GM12878 (cell line): ENCODE measurements at regions of chr7 and their contacts with region 1.

Region 1: GRCh38 chr7:64902806-64903721 is at the start of gene ZNF273:
- DNase-seq: peak; percentile 71
- ATAC-seq: peak; percentile 96
- H3K4me3 ChIP-seq: peak within 1 kb of the TSS; percentile 69
- H3K27ac ChIP-seq: peak within 1 kb of the TSS; percentile 94
- H3K4me1 ChIP-seq: no peaks in the 10 kb centered on the region
- H3K27me3 ChIP-seq: no peaks in the 10 kb centered on the region
- CTCF ChIP-seq: no peak
- EP300 ChIP-seq: no peak
- POLR2A ChIP-seq: peak; percentile 87
- RAD21 ChIP-seq: no peak
- polyA plus RNA-seq, gene ZNF273: 5.1 to 10.3 TPM

Region 2: DNA sequence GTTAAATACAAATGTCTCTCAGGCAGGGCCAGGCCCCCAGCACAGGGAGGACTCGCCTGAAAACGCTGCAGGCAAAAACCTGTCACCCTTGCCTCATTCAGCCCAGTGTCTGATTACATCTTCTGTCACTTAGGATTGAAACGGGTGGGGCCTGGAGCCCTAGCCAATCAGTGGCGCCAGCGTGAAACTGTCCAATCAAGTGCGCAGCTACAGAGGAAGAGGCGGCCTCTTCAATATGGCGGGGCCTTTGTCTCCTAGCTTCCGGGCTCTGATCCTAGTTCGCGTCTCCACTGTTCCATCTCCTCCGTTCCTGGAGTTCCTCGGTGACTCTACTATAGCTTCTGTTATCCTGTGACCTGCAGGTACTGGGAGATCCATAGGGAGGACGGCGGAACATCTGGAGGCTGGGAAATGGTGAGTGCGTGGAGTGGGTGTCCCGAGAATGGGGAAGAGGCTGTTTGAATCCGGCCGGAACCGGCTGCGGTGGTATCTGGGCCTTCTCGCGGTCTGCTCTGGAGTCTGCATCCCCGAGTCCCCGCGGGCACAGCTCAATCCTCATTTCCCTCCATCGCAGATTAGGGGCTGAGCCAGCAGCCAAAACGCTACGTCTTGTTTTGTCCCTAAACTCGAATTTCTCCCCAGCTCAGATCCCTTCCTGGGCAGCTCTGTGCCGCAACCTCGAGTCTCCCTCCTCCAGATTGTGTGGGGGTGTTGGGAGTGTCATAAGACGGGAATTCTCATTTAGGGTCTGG is 589.1 kb before region 1 on chr7 and contains the start of gene ZNF736:
- CTCF ChIA-PET with region 1: no interaction called
- POLR2A ChIA-PET with region 1: no interaction called
- RAD21 ChIA-PET with region 1: interaction called, 3 read pairs
- SMC1A ChIA-PET with region 1: no interaction called
- in situ Hi-C with region 1: loop called (anchors 10 kb)
- intact Hi-C with region 1: loop called (anchors 5 kb)
- DNase-seq: peak; percentile 79
- ATAC-seq: peak; percentile 99
- H3K4me3 ChIP-seq: peak within 1 kb of the TSS; percentile 96
- H3K27ac ChIP-seq: peak within 1 kb of the TSS; percentile 96
- H3K4me1 ChIP-seq: no peaks in the 10 kb centered on the region
- H3K27me3 ChIP-seq: no peaks in the 10 kb centered on the region
- CTCF ChIP-seq: no peak
- EP300 ChIP-seq: no peak
- POLR2A ChIP-seq: peak; percentile 93
- RAD21 ChIP-seq: no peak
- polyA plus RNA-seq, gene ZNF736: 1.9 to 3.7 TPM

Region 3: GRCh38 chr7:64562626-64563275 is 340.3 kb before region 1 on chr7 and contains the start of gene ZNF680:
- CTCF ChIA-PET with region 1: no interaction called
- POLR2A ChIA-PET with region 1: interaction called, 9 read pairs
- RAD21 ChIA-PET with region 1: interaction called, 3 read pairs
- SMC1A ChIA-PET with region 1: no interaction called
- in situ Hi-C with region 1: no loop called
- intact Hi-C with region 1: loop called (anchors 5 kb)
- DNase-seq: peak; percentile 75
- ATAC-seq: peak; percentile 99
- H3K4me3 ChIP-seq: peak within 1 kb of the TSS; percentile 74
- H3K27ac ChIP-seq: peak within 1 kb of the TSS; percentile 75
- H3K4me1 ChIP-seq: no peaks in the 10 kb centered on the region
- H3K27me3 ChIP-seq: no peaks in the 10 kb centered on the region
- CTCF ChIP-seq: no peak
- EP300 ChIP-seq: no peak
- POLR2A ChIP-seq: peak; percentile 82
- RAD21 ChIP-seq: no peak
- polyA plus RNA-seq, gene ZNF680: 5.0 to 6.2 TPM

Region 4: GRCh38 chr7:64794171-64794844 is 108.8 kb before region 1 on chr7 and contains the start of gene ZNF138:
- CTCF ChIA-PET with region 1: interaction called, 3 read pairs
- POLR2A ChIA-PET with region 1: interaction called, 6 read pairs
- RAD21 ChIA-PET with region 1: interaction called, 3 read pairs
- SMC1A ChIA-PET with region 1: interaction called, 4 read pairs
- in situ Hi-C with region 1: no loop called
- intact Hi-C with region 1: loop called (anchors 5 kb)
- DNase-seq: peak; percentile 84
- ATAC-seq: peak; percentile 100
- H3K4me3 ChIP-seq: peak within 1 kb of the TSS; percentile 88
- H3K27ac ChIP-seq: peak within 1 kb of the TSS; percentile 92
- H3K4me1 ChIP-seq: no peaks in the 10 kb centered on the region
- H3K27me3 ChIP-seq: no peaks in the 10 kb centered on the region
- CTCF ChIP-seq: no peak
- EP300 ChIP-seq: no peak
- POLR2A ChIP-seq: peak; percentile 90
- RAD21 ChIP-seq: no peak
- polyA plus RNA-seq, gene ZNF138: 8.6 to 11.0 TPM